ENCODE measurements at regions of chr18 and their contacts with region 1.

Region 1: DNA sequence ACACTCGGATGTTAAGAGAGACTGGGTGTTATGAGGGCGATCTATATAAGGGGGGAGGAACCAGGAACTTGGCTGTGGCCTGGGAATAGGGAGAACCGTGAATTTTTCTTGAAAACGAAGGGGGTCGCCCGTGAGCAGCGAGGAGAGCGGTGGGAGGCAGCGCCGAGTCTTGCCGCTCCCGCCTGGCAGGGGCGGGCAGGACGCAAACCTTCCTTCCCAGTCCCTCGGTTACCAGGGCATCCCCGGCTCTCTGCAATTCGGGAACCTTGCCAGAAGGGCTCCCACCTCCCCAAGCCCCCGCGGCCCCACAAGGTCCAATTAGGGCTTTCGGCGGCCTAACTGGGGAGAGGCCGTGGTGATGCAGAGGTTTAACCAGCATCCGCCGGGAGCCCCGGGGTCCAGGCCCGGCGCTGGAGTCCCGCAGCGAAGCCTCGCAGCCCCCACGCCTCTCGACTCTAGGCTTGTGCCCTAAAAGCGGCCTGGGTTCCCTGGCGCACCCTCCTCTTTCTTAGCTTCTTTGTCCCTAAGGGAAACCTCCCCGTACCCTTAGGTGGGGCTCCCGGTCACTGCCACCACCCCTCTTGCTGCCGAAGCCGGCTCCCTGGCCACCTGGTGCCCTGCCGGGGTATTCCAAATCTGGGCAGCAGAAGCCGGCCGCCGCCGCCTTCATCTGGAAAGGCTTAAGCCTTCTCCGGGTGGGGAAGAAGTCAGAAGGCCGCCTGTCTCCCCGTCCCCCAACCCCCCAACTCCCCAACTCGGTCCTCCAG is 680 bp upstream of the FHOD3 start:
- DNase-seq: peak; percentile 36 to 62
- H3K4me3 ChIP-seq: peak overlapping the region; percentile 67; the same call in 1 of the 2 replicates
- H3K27ac ChIP-seq: peak overlapping the region; percentile 65
- H3K4me1 ChIP-seq: peaks cover 19% of the 10 kb centered on the region
- H3K27me3 ChIP-seq: no peaks in the 10 kb centered on the region
- CTCF ChIP-seq: peak; percentile 50

Region 2: GRCh38 chr18:36372903-36373311 is 76.1 kb after region 1 on chr18:
- CTCF ChIA-PET with region 1: no interaction called
- POLR2A ChIA-PET with region 1: no interaction called
- intact Hi-C with region 1: loop called (anchors 5 kb)
- DNase-seq: peak; percentile 10 to 77
- H3K4me3 ChIP-seq: no peak overlapping the region
- H3K27ac ChIP-seq: 0 out of 2 replicates have a peak overlapping the region, but pooled peaks have one; percentile 39
- H3K4me1 ChIP-seq: peaks cover 14% of the 10 kb centered on the region
- H3K27me3 ChIP-seq: no peaks in the 10 kb centered on the region
- CTCF ChIP-seq: peak; percentile 25; the same call in 1 of the 2 replicates

Region 3: DNA sequence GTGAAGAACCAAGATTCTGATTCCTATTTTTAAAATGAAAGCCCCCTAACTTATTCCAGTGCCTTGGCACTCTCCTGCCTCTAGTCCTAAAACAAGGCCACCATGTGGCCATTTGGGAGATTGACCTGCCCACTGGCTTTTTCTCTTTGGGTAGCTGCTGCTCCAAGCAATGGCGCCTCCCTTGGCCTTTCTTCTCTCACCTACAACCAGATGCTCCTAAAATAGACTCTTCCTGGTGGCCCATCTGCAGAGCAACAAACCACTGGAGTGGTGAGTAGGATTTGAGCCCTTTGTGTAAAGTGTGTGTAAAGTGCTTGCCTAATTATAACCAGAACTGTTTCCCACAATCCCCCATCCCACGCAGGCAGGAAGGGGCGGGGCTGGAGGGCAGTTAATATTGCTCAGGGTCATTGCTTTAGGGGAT is 114.9 kb after region 1 on chr18:
- CTCF ChIA-PET with region 1: no interaction called
- POLR2A ChIA-PET with region 1: no interaction called
- intact Hi-C with region 1: loop called (anchors 5 kb)
- DNase-seq: peak in 1 of 2 experiments; percentile 8
- H3K4me3 ChIP-seq: no peak overlapping the region
- H3K27ac ChIP-seq: no peak overlapping the region
- H3K4me1 ChIP-seq: no peaks in the 10 kb centered on the region
- H3K27me3 ChIP-seq: no peaks in the 10 kb centered on the region
- CTCF ChIP-seq: peak; percentile 27; the same call in 1 of the 2 replicates

Region 4: GRCh38 chr18:36468161-36468560 is 171.3 kb after region 1 on chr18:
- CTCF ChIA-PET with region 1: no interaction called
- POLR2A ChIA-PET with region 1: no interaction called
- intact Hi-C with region 1: no loop called
- DNase-seq: no peak
- H3K4me3 ChIP-seq: no peak overlapping the region
- H3K27ac ChIP-seq: no peak overlapping the region
- H3K4me1 ChIP-seq: no peaks in the 10 kb centered on the region
- H3K27me3 ChIP-seq: no peaks in the 10 kb centered on the region
- CTCF ChIP-seq: no peak

Region 5: DNA sequence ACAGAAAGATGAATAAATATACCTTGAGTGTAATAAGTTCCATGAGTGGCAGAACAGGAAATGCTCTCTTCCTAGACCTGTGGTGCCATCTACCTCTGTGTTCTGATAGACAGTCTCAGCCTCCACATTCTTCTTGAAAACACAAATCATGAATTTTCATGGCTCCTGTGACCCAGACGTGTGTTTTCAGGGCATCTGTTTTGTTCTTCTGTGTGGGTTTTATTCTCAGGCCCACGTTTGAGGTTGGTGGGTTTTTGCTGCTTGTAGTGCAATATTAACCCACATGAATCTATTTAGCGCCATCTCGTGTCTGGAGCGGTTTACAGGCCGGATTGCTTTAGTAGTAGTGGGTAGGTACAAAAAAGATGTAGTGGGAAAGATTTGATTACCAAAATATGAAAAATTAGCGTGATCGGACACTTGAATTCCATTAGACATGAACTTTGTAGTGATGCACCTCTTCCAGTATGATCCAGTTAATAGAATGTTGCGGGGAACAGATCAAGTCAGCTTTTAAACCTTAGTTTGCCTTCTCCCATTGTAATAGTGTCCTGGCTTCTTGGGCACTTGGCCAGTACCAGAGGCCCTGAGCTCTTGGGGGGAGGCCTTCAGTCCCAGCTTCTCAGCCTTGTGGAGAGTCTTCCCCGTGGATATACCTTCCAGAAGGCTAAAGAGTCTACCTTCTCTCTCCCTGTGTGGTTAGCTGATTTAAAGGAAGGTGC is 275.5 kb after region 1 on chr18:
- CTCF ChIA-PET with region 1: no interaction called
- POLR2A ChIA-PET with region 1: no interaction called
- intact Hi-C with region 1: loop called (anchors 2 kb)
- DNase-seq: peak in 1 of 2 experiments; percentile 35
- H3K4me3 ChIP-seq: no peak overlapping the region
- H3K27ac ChIP-seq: no peak overlapping the region
- H3K4me1 ChIP-seq: no peaks in the 10 kb centered on the region
- H3K27me3 ChIP-seq: no peaks in the 10 kb centered on the region
- CTCF ChIP-seq: peak; percentile 57

Region 6: DNA sequence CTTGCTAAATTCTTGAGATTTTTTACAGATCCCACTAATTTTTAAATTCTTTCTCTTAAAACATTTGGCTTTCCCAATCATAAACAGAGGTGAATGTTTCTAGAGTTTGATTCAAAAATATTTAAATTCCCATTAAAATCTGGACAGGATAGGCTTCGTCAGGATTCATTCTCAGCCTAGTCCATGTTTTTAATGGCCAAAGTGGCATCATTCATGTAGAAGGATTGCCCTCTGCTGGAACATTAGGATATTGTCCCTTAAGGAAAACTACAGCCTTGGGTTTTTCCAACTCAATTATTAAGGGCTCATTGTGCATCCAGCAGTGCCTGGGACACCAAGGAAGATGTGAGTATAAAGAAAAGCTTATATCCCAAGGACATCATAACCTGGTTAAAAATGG is 460.2 kb after region 1 on chr18:
- CTCF ChIA-PET with region 1: no interaction called
- POLR2A ChIA-PET with region 1: no interaction called
- intact Hi-C with region 1: loop called (anchors 10 kb)
- DNase-seq: no peak
- H3K4me3 ChIP-seq: no peak overlapping the region
- H3K27ac ChIP-seq: no peak overlapping the region
- H3K4me1 ChIP-seq: peaks cover 7% of the 10 kb centered on the region; the same call in 1 of the 2 replicates
- H3K27me3 ChIP-seq: no peaks in the 10 kb centered on the region
- CTCF ChIP-seq: peak; percentile 76